Psoas muscle (tissue), 8 donors: ENCODE measurements at regions of chr9 and their contacts with region 1.

Region 1: DNA sequence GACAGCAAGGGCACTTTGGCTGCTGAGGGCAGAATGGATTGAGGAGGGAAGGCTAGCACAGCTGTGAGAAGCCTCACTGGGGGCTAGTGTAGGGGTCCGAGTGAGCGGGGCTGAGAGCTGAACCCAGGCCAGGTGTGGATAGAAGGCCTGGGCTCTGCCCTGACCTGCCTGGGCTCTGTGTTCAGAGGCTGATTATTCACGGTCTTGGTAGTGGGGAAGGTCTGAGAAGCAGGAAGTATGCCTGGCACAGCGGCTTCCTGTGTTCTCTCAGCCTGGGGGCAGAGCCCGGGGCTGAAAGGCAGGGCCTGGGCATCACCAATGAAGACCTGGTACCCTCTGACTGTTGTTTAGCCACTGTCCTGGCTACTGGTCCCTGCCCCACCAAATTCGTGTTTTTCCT is 136.4 kb upstream of the TBC1D2 start:
- DNase-seq: no peak
- ATAC-seq: no peak
- H3K4me3 ChIP-seq: no peak overlapping the region
- H3K27ac ChIP-seq: no peak overlapping the region
- H3K4me1 ChIP-seq: no peaks in the 10 kb centered on the region
- H3K27me3 ChIP-seq: peaks cover 0 to 3% (median 0%) of the 10 kb centered on the region in 3 donors
- CTCF ChIP-seq: no peak

Region 2: GRCh38 chr9:98241357-98242300 is 150.2 kb before region 1 on chr9:
- intact Hi-C with region 1: no loop called
- DNase-seq: no peak
- ATAC-seq: no peak
- H3K4me3 ChIP-seq: no peak overlapping the region
- H3K27ac ChIP-seq: no peak overlapping the region
- H3K4me1 ChIP-seq: no peaks in the 10 kb centered on the region
- H3K27me3 ChIP-seq: no peaks in the 10 kb centered on the region
- CTCF ChIP-seq: no peak

Region 3: DNA sequence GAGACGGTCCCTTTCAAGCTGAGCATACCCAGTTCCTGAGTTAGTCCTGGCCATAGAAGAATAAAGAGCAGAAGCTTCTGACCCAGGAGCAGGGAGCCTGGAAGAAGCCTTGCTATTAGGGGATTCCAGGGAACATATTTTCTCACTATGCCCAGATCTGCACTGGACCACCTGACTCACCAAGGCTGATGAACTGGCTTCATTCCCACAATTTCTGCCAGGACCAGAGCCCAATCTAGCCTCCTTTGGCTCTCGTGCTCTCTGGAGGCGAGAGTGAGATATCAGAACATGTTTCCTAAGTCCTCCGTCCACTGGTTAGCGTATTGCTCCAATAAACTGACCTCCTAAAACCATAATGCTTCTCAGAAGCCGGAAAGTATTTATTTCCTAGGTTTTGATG is 307.0 kb after region 1 on chr9:
- intact Hi-C with region 1: loop called in 1 of 2 experiments (anchors 10 kb)
- DNase-seq: no peak
- ATAC-seq: no peak
- H3K4me3 ChIP-seq: no peak overlapping the region
- H3K27ac ChIP-seq: no peak overlapping the region
- H3K4me1 ChIP-seq: no peaks in the 10 kb centered on the region
- H3K27me3 ChIP-seq: peaks cover 0 to 14% (median 6%) of the 10 kb centered on the region in 3 donors
- CTCF ChIP-seq: no peak